ENCODE measurements at regions of chr9 and their contacts with region 1.

Region 1: GRCh38 chr9:69153707-69154521 is 20.2 kb upstream of the TJP2 start:
- DNase-seq: no peak
- H3K4me3 ChIP-seq: no peak overlapping the region
- CTCF ChIP-seq: no peak

Region 2: DNA sequence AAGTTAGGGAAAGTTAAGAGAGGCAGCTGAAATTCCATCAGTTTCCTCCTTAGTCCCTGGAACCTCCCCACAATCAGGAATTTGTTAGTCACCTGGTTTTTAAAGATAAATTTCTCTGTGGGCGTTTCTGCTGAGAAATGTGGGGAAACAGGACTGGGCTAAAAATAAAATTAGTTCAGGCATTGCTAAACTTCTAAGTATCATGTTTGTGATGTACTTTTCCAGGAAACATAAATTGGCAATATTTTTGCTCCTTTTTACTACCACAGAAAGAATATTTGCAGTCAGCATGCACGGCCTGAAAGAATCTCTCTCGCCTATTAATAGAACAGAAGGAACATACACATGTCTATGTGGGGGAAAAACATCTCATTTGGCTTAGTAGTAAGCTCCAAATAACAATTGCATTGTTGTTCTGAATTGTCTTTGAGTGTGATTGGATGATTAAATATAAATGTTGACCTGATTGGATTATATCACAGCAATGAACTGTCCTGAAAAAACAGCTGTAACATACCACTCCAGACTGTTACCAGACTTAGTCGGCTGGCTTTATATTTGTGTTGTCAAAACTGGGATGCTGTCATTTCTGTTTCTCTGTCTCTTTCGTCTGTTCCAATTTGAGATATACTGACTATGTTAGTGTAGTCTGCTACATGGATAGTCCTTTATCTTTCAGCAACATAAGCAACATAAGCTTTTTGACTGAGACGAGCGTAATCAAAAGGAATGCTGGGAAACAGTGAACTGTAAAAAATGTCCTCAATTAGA is 33.1 kb after region 1 on chr9:
- in situ Hi-C with region 1: loop called (anchors 5 kb)
- DNase-seq: no peak
- H3K4me3 ChIP-seq: no peak overlapping the region
- CTCF ChIP-seq: no peak

Region 3: GRCh38 chr9:69379250-69379982 is 225.5 kb after region 1 on chr9:
- in situ Hi-C with region 1: no loop called
- DNase-seq: no peak
- H3K4me3 ChIP-seq: no peak overlapping the region
- CTCF ChIP-seq: no peak